SK-N-SH (cell line): ENCODE measurements at regions of chr12 and their contacts with region 1.

Region 1: GRCh38 chr12:275812-276211 is 13.2 kb upstream of the SLC6A13 start:
- DNase-seq: no peak
- H3K4me3 ChIP-seq: no peak overlapping the region
- H3K27ac ChIP-seq: no peak overlapping the region
- H3K4me1 ChIP-seq: no peaks in the 10 kb centered on the region
- H3K27me3 ChIP-seq: no peaks in the 10 kb centered on the region
- CTCF ChIP-seq: no peak
- EP300 ChIP-seq: no peak
- RAD21 ChIP-seq: no peak

Region 2: GRCh38 chr12:288687-289086 is 12.9 kb after region 1 on chr12:
- CTCF ChIA-PET with region 1: interaction called, 11 read pairs
- POLR2A ChIA-PET with region 1: no interaction called
- DNase-seq: no peak
- H3K4me3 ChIP-seq: no peak overlapping the region
- H3K27ac ChIP-seq: no peak overlapping the region
- H3K4me1 ChIP-seq: peaks cover 0 to 14% of the 10 kb centered on the region in 2 experiments; a peak in 1 of 4 replicates
- H3K27me3 ChIP-seq: no peaks in the 10 kb centered on the region
- CTCF ChIP-seq: no peak
- EP300 ChIP-seq: no peak
- RAD21 ChIP-seq: no peak

Region 3: DNA sequence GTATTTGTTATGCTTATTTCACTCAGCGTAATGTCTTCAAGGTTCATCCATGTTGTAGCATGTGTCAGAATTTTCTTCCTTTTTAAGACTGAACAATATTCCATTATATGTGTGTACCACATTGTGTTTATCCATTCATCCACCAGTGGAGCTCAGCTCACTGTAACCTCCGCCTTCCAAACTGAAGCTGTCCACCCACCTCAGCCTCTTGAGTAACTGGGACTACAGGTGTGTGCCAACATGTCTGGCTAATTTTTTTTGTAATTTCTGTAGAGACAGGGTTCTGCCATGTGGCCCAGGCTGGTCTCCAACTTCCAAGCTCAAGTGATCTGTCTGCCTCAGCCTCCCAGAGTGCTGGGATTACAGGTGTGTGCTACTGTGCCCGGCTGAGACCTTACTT is 146.7 kb after region 1 on chr12:
- CTCF ChIA-PET with region 1: no interaction called
- POLR2A ChIA-PET with region 1: no interaction called
- DNase-seq: no peak
- H3K4me3 ChIP-seq: no peak overlapping the region
- H3K27ac ChIP-seq: no peak overlapping the region
- H3K4me1 ChIP-seq: no peaks in the 10 kb centered on the region
- H3K27me3 ChIP-seq: no peaks in the 10 kb centered on the region
- CTCF ChIP-seq: no peak
- EP300 ChIP-seq: no peak
- RAD21 ChIP-seq: no peak

Region 4: DNA sequence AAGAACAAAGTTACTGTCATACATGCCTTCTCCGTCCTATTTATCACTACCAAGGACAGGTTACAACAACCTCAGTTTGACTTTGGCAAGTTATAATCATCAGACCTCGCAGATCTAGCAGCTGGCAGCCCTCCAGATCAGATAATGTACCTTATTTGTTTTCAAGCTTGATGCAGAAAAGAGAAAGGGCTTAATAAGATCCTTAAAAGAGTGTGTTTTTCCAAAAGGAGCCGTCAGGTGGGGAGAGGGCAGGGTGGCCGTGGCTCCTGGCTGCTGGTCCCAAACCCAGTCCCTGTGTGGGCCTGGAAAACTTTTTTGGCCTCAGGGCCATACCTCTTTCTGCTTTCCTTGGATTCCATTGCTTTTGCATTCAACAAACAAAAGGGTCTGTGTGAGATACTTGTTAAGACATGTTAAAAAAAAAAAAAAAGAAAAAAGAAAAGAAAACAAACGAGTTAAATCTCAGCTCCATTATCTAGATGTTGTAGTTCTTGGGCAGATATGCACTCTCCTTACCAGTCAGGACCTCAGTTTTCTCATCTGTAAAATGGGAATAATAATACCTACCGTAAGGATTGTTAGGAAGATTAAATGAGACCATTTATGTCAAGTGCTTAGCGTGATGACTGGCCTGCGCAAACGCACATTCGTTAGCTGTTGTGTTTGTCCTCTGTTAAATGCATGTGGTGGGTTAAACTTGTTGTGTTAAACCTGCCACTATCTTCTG is 248.6 kb after region 1 on chr12:
- CTCF ChIA-PET with region 1: no interaction called
- POLR2A ChIA-PET with region 1: no interaction called
- DNase-seq: no peak
- H3K4me3 ChIP-seq: no peak overlapping the region
- H3K27ac ChIP-seq: no peak overlapping the region
- H3K4me1 ChIP-seq: peaks cover 0 to 3% of the 10 kb centered on the region in 2 experiments; a peak in 1 of 4 replicates
- H3K27me3 ChIP-seq: peaks cover 7% of the 10 kb centered on the region; the same call in 1 of the 2 replicates
- CTCF ChIP-seq: no peak
- EP300 ChIP-seq: no peak
- RAD21 ChIP-seq: no peak